Psoas muscle (tissue), 8 donors: ENCODE measurements at regions of chrX and their contacts with region 1.

Region 1: DNA sequence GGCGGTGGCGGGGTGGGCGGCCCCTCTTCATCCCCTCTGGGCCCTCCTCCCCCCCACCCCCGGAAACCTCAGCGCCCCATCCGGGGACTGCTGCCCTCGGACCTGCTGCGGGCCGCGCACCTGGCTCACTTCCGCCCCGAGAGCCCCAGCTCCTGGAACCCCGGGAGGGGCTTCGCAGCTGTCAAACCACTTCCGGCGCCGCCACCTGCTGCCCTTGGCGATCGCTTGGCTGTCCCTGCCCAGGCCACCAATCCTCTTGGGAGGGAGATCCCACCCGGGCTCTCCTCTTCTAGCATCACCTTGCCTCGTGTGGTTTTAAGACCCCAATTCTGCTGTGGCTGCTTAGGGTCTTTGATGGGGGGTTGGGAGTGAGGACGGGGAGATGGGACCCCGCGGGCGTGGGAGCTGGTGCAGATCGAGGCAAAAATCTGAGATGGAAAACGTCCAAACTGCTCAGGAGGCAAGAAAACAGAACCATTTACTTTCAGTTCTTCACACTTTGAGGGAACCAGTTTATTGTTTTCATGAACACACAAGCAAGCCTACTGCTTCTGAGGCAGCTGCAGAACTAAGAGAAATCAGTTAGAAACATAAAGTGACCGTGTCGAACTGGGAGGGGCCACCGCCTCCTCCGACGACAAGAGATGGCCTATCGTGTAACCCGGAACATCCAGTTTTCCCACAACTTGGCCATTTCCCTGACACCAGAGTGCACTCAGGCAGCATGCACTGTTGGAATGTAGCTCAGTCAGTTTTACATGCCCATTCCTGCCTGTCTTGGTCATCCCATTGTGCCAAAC is 779 bp downstream of the MTMR1 start:
- DNase-seq: peak; percentile 64 to 81
- ATAC-seq: peak; percentile 83 to 91 (median 85)
- H3K4me3 ChIP-seq: peak overlapping the region; percentile 69
- H3K27ac ChIP-seq: peak overlapping the region; percentile 83
- H3K4me1 ChIP-seq: no peaks in the 10 kb centered on the region
- H3K27me3 ChIP-seq: no peaks in the 10 kb centered on the region
- CTCF ChIP-seq: no peak

Region 2: GRCh38 chrX:150643271-150643670 is 50.7 kb before region 1 on chrX:
- intact Hi-C with region 1: loop called in 1 of 2 experiments (anchors 5 kb)
- DNase-seq: no peak
- ATAC-seq: no peak
- H3K4me3 ChIP-seq: no peak overlapping the region
- H3K27ac ChIP-seq: no peak overlapping the region
- H3K4me1 ChIP-seq: no peaks in the 10 kb centered on the region
- H3K27me3 ChIP-seq: no peaks in the 10 kb centered on the region
- CTCF ChIP-seq: no peak

Region 3: DNA sequence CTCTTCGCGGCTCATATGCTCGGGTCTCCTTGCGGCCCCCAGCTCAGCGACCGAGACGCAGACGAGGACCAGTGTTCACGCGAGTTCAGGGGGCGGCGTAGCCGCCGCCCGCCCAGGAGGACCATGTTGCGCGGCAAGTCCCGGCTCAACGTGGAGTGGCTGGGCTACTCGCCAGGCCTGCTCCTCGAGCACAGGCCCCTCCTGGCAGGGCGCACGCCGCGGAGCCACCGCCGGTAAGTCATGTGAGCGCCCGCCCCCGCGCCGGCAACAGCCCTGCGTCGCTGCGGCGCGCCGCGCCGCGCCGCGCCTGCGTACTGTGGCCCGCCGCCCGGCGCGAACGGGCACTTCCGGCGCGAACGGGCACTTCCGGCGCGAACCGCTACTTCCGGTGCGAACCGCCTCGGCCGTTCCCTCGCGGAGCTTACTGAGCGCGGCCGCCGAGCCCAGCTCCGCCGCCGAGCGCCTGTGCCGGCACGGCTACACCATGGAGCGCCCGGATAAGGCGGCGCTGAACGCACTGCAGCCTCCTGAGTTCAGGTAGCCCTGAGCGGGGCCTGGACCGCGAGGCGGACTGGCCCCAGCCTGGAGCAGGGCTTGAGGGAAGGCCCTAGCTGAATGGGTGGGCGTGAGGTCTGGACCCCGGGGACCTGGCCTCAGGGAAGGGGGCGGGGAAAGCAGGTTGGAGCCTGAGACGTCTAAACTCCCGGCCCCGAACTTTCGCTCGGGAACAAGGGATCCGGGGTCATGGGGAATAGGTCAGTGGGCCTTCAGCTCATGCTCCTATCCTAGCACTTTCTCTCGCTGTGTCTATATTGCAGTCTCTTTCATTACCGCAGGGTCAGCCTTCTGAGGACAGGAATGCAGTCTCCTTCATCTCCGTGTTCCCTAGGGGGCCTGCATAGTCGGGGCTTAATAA is 703.1 kb after region 1 on chrX and contains the start of gene VMA21:
- intact Hi-C with region 1: no loop called
- DNase-seq: peak; percentile 92 to 95
- ATAC-seq: peak; percentile 97 to 99 (median 98)
- H3K4me3 ChIP-seq: peak within 1 kb of the TSS; percentile 84
- H3K27ac ChIP-seq: peak within 1 kb of the TSS; percentile 96
- H3K4me1 ChIP-seq: no peaks in the 10 kb centered on the region
- H3K27me3 ChIP-seq: no peaks in the 10 kb centered on the region
- CTCF ChIP-seq: no peak
- total RNA-seq, gene VMA21: 17.4 to 24.1 (median 20.6) TPM